ENCODE measurements at regions of chr2 and their contacts with region 1.

Region 1: GRCh38 chr2:202703091-202703490 is 68.3 kb downstream of the FAM117B start:
- DNase-seq: no peak
- ATAC-seq: no peak
- H3K4me3 ChIP-seq: no peak overlapping the region
- H3K4me3 Mint-ChIP-seq: no peak overlapping the region
- H3K27ac ChIP-seq: no peak overlapping the region
- H3K27ac Mint-ChIP-seq: peak overlapping the region; percentile 63
- H3K4me1 ChIP-seq: peaks cover 31% of the 10 kb centered on the region
- H3K4me1 Mint-ChIP-seq: peaks cover 57% of the 10 kb centered on the region
- H3K27me3 ChIP-seq: no peaks in the 10 kb centered on the region
- H3K27me3 Mint-ChIP-seq: no peaks in the 10 kb centered on the region
- CTCF ChIP-seq: no peak

Region 2: GRCh38 chr2:202671317-202672035 is 31.6 kb before region 1 on chr2:
- CTCF ChIA-PET with region 1: no interaction called
- POLR2A ChIA-PET with region 1: no interaction called
- intact Hi-C with region 1: loop called in 1 of 2 experiments (anchors 5 kb)
- DNase-seq: no peak
- ATAC-seq: no peak
- H3K4me3 ChIP-seq: no peak overlapping the region
- H3K4me3 Mint-ChIP-seq: no peak overlapping the region
- H3K27ac ChIP-seq: no peak overlapping the region
- H3K27ac Mint-ChIP-seq: no peak overlapping the region
- H3K4me1 ChIP-seq: peaks cover 77% of the 10 kb centered on the region
- H3K4me1 Mint-ChIP-seq: peaks cover 74% of the 10 kb centered on the region
- H3K27me3 ChIP-seq: no peaks in the 10 kb centered on the region
- H3K27me3 Mint-ChIP-seq: no peaks in the 10 kb centered on the region
- CTCF ChIP-seq: no peak

Region 3: DNA sequence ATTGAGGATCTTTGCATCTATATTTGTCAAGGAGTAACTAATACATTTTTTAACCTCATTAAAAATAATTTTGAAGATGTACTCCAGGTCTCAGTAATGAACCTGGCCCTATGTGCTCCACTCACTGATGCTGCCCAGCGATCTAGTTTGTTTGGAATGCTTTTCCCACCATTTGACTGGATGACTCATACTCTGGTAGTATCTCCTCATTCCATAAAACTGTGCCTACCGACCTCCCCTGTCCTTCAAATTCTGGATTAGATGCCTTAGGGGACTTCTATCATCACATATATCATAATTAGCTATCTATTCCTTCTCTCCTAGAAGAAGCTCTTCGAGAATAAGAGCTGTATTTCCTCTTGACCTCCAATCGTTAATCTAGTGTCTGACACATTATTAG is 15.5 kb after region 1 on chr2:
- CTCF ChIA-PET with region 1: interaction called, 4 read pairs
- POLR2A ChIA-PET with region 1: no interaction called
- intact Hi-C with region 1: loop called in 1 of 2 experiments (anchors 2 kb)
- DNase-seq: no peak
- ATAC-seq: no peak
- H3K4me3 ChIP-seq: no peak overlapping the region
- H3K4me3 Mint-ChIP-seq: no peak overlapping the region
- H3K27ac ChIP-seq: no peak overlapping the region
- H3K27ac Mint-ChIP-seq: peak overlapping the region; percentile 82
- H3K4me1 ChIP-seq: peaks cover 36% of the 10 kb centered on the region
- H3K4me1 Mint-ChIP-seq: peaks cover 48% of the 10 kb centered on the region
- H3K27me3 ChIP-seq: no peaks in the 10 kb centered on the region
- H3K27me3 Mint-ChIP-seq: no peaks in the 10 kb centered on the region
- CTCF ChIP-seq: no peak

Region 4: DNA sequence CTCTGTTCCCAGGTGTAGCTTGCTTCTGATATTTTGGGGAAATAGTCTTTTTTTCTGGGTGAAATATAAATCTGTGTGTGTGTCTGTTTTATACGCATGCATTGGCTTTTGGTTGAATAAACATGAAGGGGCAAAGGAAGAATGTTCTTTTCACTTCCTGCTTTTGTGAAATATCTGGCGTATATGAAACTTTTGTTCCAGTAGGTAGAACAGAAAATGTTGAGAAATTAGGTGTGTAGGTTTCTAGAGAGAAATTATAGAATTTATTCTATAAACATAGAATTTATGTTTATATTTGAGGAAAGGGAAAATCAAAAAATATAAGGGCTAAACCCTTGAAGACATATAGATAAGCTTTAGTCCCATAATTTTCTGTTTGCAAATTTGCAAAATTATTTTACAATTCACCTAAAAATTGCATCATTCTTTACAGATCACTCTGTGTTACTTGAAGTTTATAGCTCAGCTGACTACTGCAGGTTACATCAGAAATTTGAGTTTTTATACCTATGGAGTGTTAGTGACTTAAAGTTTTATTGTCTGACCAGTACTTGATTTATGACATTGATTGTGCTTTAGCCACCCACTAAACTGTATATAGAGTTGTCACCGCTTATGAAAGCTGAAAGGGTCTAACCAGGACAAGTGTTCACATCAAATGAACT is 47.8 kb after region 1 on chr2:
- CTCF ChIA-PET with region 1: no interaction called
- POLR2A ChIA-PET with region 1: no interaction called
- intact Hi-C with region 1: loop called in 1 of 2 experiments (anchors 5 kb)
- DNase-seq: no peak
- ATAC-seq: peak; percentile 55
- H3K4me3 ChIP-seq: no peak overlapping the region
- H3K4me3 Mint-ChIP-seq: peak overlapping the region; percentile 26
- H3K27ac ChIP-seq: peak overlapping the region in 1 of 2 experiments; percentile 29
- H3K27ac Mint-ChIP-seq: peak overlapping the region; percentile 84
- H3K4me1 ChIP-seq: peaks cover 24% of the 10 kb centered on the region
- H3K4me1 Mint-ChIP-seq: peaks cover 57% of the 10 kb centered on the region
- H3K27me3 ChIP-seq: no peaks in the 10 kb centered on the region
- H3K27me3 Mint-ChIP-seq: no peaks in the 10 kb centered on the region
- CTCF ChIP-seq: no peak

Measured in CD8-positive, alpha-beta T cell (primary cell).